ENCODE measurements at regions of chr1 and their contacts with region 1.

Region 1: GRCh38 chr1:224513787-224514209 is 79.2 kb upstream of the WDR26 start:
- DNase-seq: no peak
- ATAC-seq: peak; percentile 97
- H3K4me3 ChIP-seq: no peak overlapping the region
- H3K27ac ChIP-seq: no peak overlapping the region
- H3K4me1 ChIP-seq: peaks cover 8% of the 10 kb centered on the region
- H3K27me3 ChIP-seq: no peaks in the 10 kb centered on the region
- CTCF ChIP-seq: peak; percentile 93

Region 2: GRCh38 chr1:224411766-224412165 is 102.0 kb before region 1 on chr1:
- CTCF ChIA-PET with region 1: no interaction called
- POLR2A ChIA-PET with region 1: no interaction called
- in situ Hi-C with region 1: no loop called
- intact Hi-C with region 1: no loop called
- DNase-seq: no peak
- ATAC-seq: peak; percentile 70
- H3K4me3 ChIP-seq: no peak overlapping the region
- H3K27ac ChIP-seq: no peak overlapping the region
- H3K4me1 ChIP-seq: 0 out of 2 replicates have a peak, but pooled peaks cover 2% of the 10 kb centered on the region
- H3K27me3 ChIP-seq: no peaks in the 10 kb centered on the region
- CTCF ChIP-seq: no peak

Region 3: DNA sequence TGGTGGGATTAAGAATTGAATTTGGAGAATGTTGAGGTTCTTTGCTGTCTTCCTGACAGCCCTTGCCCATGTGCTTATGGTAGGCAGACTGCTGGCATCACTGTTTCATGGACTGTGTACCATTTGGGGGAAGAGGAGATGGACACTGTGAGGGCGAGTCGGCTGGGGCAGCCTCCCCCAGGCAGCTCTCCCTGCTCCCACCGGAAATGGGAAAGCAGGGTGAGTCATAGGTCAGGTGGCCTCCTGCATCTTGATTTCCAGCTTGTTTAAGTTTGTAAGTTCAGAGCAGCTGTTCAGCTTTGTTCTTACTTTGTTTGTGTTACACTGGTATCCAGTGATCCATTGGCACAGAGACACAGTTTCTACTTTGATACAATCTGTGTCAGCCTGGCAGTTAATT is 15.1 kb after region 1 on chr1:
- CTCF ChIA-PET with region 1: no interaction called
- POLR2A ChIA-PET with region 1: no interaction called
- in situ Hi-C with region 1: no loop called
- intact Hi-C with region 1: no loop called
- DNase-seq: no peak
- ATAC-seq: peak; percentile 68; the same call in 1 of the 2 replicates
- H3K4me3 ChIP-seq: no peak overlapping the region
- H3K27ac ChIP-seq: no peak overlapping the region
- H3K4me1 ChIP-seq: peaks cover 8% of the 10 kb centered on the region; the same call in 1 of the 2 replicates
- H3K27me3 ChIP-seq: no peaks in the 10 kb centered on the region
- CTCF ChIP-seq: no peak

Region 4: GRCh38 chr1:224592636-224593582 is 79.1 kb after region 1 on chr1:
- CTCF ChIA-PET with region 1: no interaction called
- POLR2A ChIA-PET with region 1: no interaction called
- in situ Hi-C with region 1: no loop called
- intact Hi-C with region 1: no loop called
- DNase-seq: no peak
- ATAC-seq: no peak
- H3K4me3 ChIP-seq: no peak overlapping the region
- H3K27ac ChIP-seq: no peak overlapping the region
- H3K4me1 ChIP-seq: no peaks in the 10 kb centered on the region
- H3K27me3 ChIP-seq: no peaks in the 10 kb centered on the region
- CTCF ChIP-seq: no peak

Region 5: GRCh38 chr1:224644553-224645154 is 130.9 kb after region 1 on chr1:
- CTCF ChIA-PET with region 1: interaction called, 3 read pairs
- POLR2A ChIA-PET with region 1: interaction called, 3 read pairs
- in situ Hi-C with region 1: no loop called
- intact Hi-C with region 1: loop called (anchors 5 kb)
- DNase-seq: peak; percentile 54
- ATAC-seq: peak; percentile 78
- H3K4me3 ChIP-seq: no peak overlapping the region
- H3K27ac ChIP-seq: no peak overlapping the region
- H3K4me1 ChIP-seq: no peaks in the 10 kb centered on the region
- H3K27me3 ChIP-seq: no peaks in the 10 kb centered on the region
- CTCF ChIP-seq: peak; percentile 95

Measured in Panc1 (cell line).